ENCODE measurements at regions of chr5 and their contacts with region 1.

Region 1: DNA sequence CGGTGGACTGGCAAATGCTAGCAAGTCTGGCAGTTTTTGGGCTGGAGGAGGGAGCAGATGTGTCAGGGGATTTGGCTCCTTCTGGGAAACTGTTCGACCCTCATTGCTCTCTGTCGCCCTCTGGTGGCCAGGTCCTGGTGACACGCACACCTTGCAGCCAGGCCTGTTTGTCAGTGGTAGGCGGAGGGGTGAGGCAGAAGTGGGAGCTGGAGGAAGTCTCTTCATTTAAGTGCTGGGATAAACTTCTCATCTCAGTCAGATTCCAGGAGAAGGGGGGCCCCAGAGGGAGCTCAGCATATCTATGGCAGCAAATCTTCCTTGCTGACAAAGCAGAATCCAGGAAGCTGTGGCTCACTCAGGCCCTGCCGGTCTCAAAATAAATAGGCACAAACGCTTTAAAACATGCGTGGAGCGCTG is 326.5 kb downstream of the ZSWIM6 start:
- DNase-seq: peak; percentile 78 to 92 (median 90)
- ATAC-seq: peak; percentile 94
- H3K4me3 ChIP-seq: no peak overlapping the region
- H3K4me1 ChIP-seq: no peaks in the 10 kb centered on the region
- CTCF ChIP-seq: peak; percentile 93

Region 2: GRCh38 chr5:61055434-61056006 is 603.1 kb before region 1 on chr5:
- intact Hi-C with region 1: loop called in 1 of 2 experiments (anchors 10 kb)
- DNase-seq: peak in 1 of 3 donors; percentile 29
- ATAC-seq: peak; percentile 83
- H3K4me3 ChIP-seq: no peak overlapping the region
- H3K4me1 ChIP-seq: peaks cover 6% of the 10 kb centered on the region
- CTCF ChIP-seq: peak; percentile 47

Region 3: DNA sequence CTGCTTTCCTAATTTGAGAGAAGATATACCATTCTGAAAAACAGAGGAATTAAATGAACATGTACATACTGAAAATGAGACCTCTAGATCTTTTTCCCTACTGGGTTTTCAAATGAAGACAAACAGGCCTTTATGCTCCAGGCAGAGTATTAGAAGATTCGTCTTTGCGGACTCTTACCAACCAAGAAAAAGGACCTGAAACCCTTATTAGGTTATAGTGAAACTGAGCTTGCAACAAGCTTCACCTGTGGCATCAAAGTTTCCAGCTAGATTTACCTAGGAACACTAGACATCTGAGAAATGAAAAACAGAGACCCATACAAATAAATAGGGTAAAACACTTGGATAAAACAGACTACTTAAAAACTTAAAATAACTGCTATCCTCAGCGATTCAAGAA is 542.6 kb before region 1 on chr5:
- intact Hi-C with region 1: no loop called
- DNase-seq: no peak
- ATAC-seq: no peak
- H3K4me3 ChIP-seq: no peak overlapping the region
- H3K4me1 ChIP-seq: no peaks in the 10 kb centered on the region
- CTCF ChIP-seq: no peak